ENCODE measurements at regions of chr4 and their contacts with region 1.

Region 1: DNA sequence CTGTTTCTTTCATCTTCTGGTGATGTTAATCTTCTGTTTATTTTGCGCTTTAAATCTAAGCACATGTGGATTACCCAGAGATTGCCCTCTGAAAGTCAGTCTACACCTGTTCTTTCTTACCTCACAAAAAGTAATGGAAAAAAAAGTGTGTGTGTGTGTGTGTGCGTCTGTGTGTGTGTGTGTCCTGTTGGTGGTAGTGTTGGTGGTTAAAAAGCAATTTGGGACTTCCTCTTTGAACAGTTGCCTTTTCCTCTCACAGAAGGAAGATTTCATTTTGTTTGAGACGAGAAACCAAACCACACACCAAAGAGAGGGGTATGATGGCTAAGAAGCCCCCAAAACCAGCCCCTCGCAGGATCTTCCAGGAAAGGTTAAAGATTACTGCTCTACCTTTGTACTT is at the start of gene STAP1:
- DNase-seq: peak; percentile 27
- ATAC-seq: peak; percentile 80
- H3K4me3 Mint-ChIP-seq: peak within 1 kb of the TSS; percentile 98
- H3K27ac Mint-ChIP-seq: peak within 1 kb of the TSS; percentile 99
- H3K4me1 Mint-ChIP-seq: peaks cover 76% of the 10 kb centered on the region
- H3K27me3 Mint-ChIP-seq: no peaks in the 10 kb centered on the region
- CTCF ChIP-seq: no peak
- total RNA-seq, gene STAP1: 46.4 and 50.3 TPM in 2 replicates

Region 2: DNA sequence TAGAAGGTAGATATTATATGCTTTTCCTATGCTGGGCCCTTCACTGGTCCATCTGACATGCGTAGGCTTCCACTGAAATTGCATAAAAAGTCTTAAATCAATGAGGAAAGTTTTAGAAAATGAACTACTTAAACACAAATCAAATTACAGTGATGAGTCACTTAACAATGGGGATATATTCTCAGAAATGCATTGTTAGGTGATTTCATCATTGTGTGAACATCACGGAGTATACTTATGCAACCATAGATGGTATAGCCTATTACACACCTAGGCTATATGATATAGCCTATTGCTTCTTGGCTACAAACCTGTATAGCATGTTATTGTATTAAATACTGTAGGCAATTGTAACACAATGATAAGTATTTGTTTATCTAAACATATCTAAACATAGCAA is 10.3 kb after region 1 on chr4:
- CTCF ChIA-PET with region 1: interaction called, 5 read pairs
- POLR2A ChIA-PET with region 1: interaction called, 5 read pairs
- intact Hi-C with region 1: loop called (anchors 1 kb)
- DNase-seq: no peak
- ATAC-seq: no peak
- H3K4me3 Mint-ChIP-seq: no peak overlapping the region
- H3K27ac Mint-ChIP-seq: peak overlapping the region; percentile 75
- H3K4me1 Mint-ChIP-seq: peaks cover 74% of the 10 kb centered on the region
- H3K27me3 Mint-ChIP-seq: no peaks in the 10 kb centered on the region
- CTCF ChIP-seq: no peak

Region 3: GRCh38 chr4:67575232-67575888 is 16.9 kb after region 1 on chr4:
- CTCF ChIA-PET with region 1: interaction called, 3 read pairs
- POLR2A ChIA-PET with region 1: interaction called, 6 read pairs
- intact Hi-C with region 1: loop called (anchors 1 kb)
- DNase-seq: no peak
- ATAC-seq: peak; percentile 91
- H3K4me3 Mint-ChIP-seq: peak overlapping the region; percentile 71
- H3K27ac Mint-ChIP-seq: peak overlapping the region; percentile 90
- H3K4me1 Mint-ChIP-seq: peaks cover 68% of the 10 kb centered on the region
- H3K27me3 Mint-ChIP-seq: no peaks in the 10 kb centered on the region
- CTCF ChIP-seq: no peak

Region 4: GRCh38 chr4:67581208-67581857 is 22.8 kb after region 1 on chr4:
- CTCF ChIA-PET with region 1: interaction called, 6 read pairs
- POLR2A ChIA-PET with region 1: interaction called, 7 read pairs
- intact Hi-C with region 1: loop called (anchors 1 kb)
- DNase-seq: no peak
- ATAC-seq: peak; percentile 81
- H3K4me3 Mint-ChIP-seq: peak overlapping the region; percentile 55
- H3K27ac Mint-ChIP-seq: peak overlapping the region; percentile 83
- H3K4me1 Mint-ChIP-seq: peaks cover 46% of the 10 kb centered on the region
- H3K27me3 Mint-ChIP-seq: no peaks in the 10 kb centered on the region
- CTCF ChIP-seq: no peak

Region 5: GRCh38 chr4:67721770-67722597 is 163.5 kb after region 1 on chr4:
- CTCF ChIA-PET with region 1: no interaction called
- POLR2A ChIA-PET with region 1: no interaction called
- intact Hi-C with region 1: no loop called
- DNase-seq: no peak
- ATAC-seq: no peak
- H3K4me3 Mint-ChIP-seq: no peak overlapping the region
- H3K27ac Mint-ChIP-seq: no peak overlapping the region
- H3K4me1 Mint-ChIP-seq: no peaks in the 10 kb centered on the region
- H3K27me3 Mint-ChIP-seq: no peaks in the 10 kb centered on the region
- CTCF ChIP-seq: no peak